BJ (cell line): ENCODE measurements at regions of chr17 and their contacts with region 1.

Region 1: DNA sequence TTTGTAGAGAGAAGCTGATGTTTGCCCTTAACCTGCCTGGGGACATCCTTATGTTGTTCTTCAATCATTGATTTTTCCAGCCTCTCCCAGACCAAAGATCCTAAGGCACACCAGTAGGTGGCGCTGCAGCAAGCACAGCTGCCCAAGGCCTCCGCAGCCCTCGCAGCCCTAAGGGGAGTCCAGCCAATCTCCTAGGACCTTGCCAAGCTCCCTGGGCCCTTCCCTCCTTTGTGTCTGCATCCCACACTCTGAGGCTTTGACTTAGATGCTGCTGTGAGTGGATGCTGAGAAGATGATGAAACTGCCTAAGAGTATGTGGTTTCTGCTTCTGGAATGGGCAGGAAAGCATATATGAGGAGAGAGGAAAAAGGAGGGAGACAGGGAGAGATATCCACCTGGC is 47.1 kb downstream of the SPACA3 start:
- DNase-seq: no peak
- H3K4me3 ChIP-seq: no peak overlapping the region
- H3K27me3 ChIP-seq: peaks cover 3% of the 10 kb centered on the region; the same call in 1 of the 2 replicates
- CTCF ChIP-seq: peak; percentile 72

Region 2: GRCh38 chr17:33021731-33022408 is 16.9 kb before region 1 on chr17:
- CTCF ChIA-PET with region 1: interaction called, 19 read pairs
- POLR2A ChIA-PET with region 1: no interaction called
- DNase-seq: no peak
- H3K4me3 ChIP-seq: no peak overlapping the region
- H3K27me3 ChIP-seq: peaks cover 11% of the 10 kb centered on the region
- CTCF ChIP-seq: peak; percentile 32

Region 3: GRCh38 chr17:33028061-33028460 is 10.7 kb before region 1 on chr17:
- CTCF ChIA-PET with region 1: interaction called, 12 read pairs
- POLR2A ChIA-PET with region 1: no interaction called
- DNase-seq: no peak
- H3K4me3 ChIP-seq: no peak overlapping the region
- H3K27me3 ChIP-seq: peaks cover 6% of the 10 kb centered on the region
- CTCF ChIP-seq: no peak

Region 4: GRCh38 chr17:33052856-33053255 is 14.1 kb after region 1 on chr17:
- CTCF ChIA-PET with region 1: interaction called, 10 read pairs
- POLR2A ChIA-PET with region 1: no interaction called
- DNase-seq: no peak
- H3K4me3 ChIP-seq: no peak overlapping the region
- H3K27me3 ChIP-seq: no peaks in the 10 kb centered on the region; the same call in 1 of the 2 replicates
- CTCF ChIP-seq: no peak